GM13976 (cell line): ENCODE measurements at regions of chr9 and their contacts with region 1.

Region 1: GRCh38 chr9:112354081-112354743 is 20.8 kb upstream of the PTBP3 start:
- DNase-seq: no peak
- CTCF ChIP-seq: no peak

Region 2: GRCh38 chr9:112086627-112087026 is 267.6 kb before region 1 on chr9:
- in situ Hi-C with region 1: loop called (anchors 5 kb)
- DNase-seq: no peak
- CTCF ChIP-seq: peak; percentile 35